Dorsolateral prefrontal cortex (tissue), 120 donors: ENCODE measurements at regions of chr15 and their contacts with region 1.

Region 1: GRCh38 chr15:64046347-64047153 is at the start of gene DAPK2:
- DNase-seq: peak; percentile 32 to 86 (median 60)
- H3K4me3 ChIP-seq: peak within 1 kb of the TSS; percentile 42 to 79 (median 67)
- H3K27ac ChIP-seq: peak within 1 kb of the TSS in 39 of 59 donors; percentile 7 to 80 (median 57)
- H3K27me3 ChIP-seq: no peaks in the 10 kb centered on the region
- CTCF ChIP-seq: peak; percentile 53 to 93 (median 78)
- total RNA-seq, gene DAPK2: 3.2 to 43.7 (median 15.5) TPM

Region 2: DNA sequence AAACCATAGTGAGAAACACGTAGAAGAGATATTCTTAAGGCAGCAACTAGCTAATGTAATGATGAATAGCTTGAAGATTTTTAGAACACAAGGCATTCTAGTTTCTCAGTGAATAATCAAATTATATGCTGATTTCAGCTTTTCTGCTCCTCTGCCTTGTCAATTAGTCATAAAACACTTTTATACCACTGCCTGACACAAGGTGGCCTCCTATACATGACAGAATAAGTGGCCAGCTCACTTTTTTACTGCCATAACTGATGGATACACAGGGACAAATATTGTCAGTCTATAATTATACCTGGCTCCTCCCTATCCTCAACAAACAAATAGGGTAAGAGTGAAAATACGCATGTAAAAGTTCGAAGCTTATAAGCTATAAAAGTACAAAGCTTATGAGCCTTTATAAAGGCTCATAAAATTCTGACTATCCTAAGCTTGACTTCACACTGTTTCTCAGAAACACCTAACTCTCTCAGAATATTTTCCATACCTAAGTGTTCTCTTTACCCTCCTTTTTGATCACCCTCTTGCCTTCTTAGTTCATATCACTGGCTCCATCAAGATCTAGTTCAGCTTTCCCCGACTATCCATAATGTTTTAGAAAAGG is 294.4 kb before region 1 on chr15:
- intact Hi-C with region 1: loop called in 1 of 2 experiments (anchors 5 kb)
- DNase-seq: peak in 1 of 10 donors; percentile 23
- H3K4me3 ChIP-seq: no peak overlapping the region
- H3K27ac ChIP-seq: peak overlapping the region in 4 of 59 donors; percentile 2 to 56 (median 35)
- H3K27me3 ChIP-seq: no peaks in the 10 kb centered on the region
- CTCF ChIP-seq: peak; percentile 37 to 95 (median 77)

Region 3: GRCh38 chr15:63833021-63833696 is 213.4 kb before region 1 on chr15:
- intact Hi-C with region 1: loop called in 1 of 2 experiments (anchors 10 kb)
- DNase-seq: peak in 5 of 10 donors; percentile 3 to 61 (median 32)
- H3K4me3 ChIP-seq: peak overlapping the region; percentile 54 to 98 (median 90)
- H3K27ac ChIP-seq: peak overlapping the region; percentile 28 to 97 (median 92)
- H3K27me3 ChIP-seq: no peaks in the 10 kb centered on the region
- CTCF ChIP-seq: no peak

Region 4: DNA sequence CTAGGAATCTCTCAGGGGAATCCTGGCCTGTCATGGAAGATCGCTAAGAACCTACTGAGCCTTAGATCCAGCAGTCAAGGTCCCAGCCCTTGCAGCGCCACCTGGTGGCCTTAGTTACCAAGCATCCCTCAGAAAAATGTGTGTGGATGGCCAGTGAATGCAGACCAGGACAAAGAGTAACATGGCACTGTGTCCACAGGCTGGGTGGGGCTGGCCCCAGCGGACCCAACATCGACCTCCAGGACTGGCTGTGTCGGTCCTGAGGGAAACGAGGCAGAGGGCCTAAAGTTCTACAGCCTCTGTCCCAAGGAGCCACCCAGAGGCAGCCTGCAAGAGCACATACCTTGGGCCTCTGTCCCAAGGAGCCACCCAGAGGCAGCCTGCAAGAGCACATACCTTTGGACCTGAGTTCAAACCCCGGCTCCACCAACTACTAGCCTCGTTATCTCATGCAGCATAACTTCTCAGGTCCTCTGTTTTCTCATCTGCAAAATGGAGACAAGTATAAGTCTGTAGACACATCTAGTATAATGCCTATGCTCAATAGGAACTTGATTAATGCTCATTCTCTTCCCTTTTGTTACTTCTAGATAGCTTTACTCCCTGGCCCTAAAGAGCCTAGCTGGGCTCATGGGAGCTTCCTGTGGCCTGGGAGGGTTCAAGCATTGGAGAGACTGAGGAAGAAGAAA is 155.3 kb before region 1 on chr15:
- intact Hi-C with region 1: loop called in 1 of 2 experiments (anchors 5 kb)
- DNase-seq: peak; percentile 64 to 89 (median 83)
- H3K4me3 ChIP-seq: no peak overlapping the region
- H3K27ac ChIP-seq: peak overlapping the region in 1 of 59 donors; percentile 27
- H3K27me3 ChIP-seq: no peaks in the 10 kb centered on the region
- CTCF ChIP-seq: peak; percentile 70 to 95 (median 88)

Region 5: GRCh38 chr15:63945007-63945788 is 101.4 kb before region 1 on chr15:
- intact Hi-C with region 1: loop called (anchors 5 to 10 kb)
- DNase-seq: peak in 8 of 10 donors; percentile 55 to 75 (median 62)
- H3K4me3 ChIP-seq: peak overlapping the region in 2 of 59 donors; percentile 12 to 16
- H3K27ac ChIP-seq: peak overlapping the region in 9 of 59 donors; percentile 2 to 59 (median 14)
- H3K27me3 ChIP-seq: no peaks in the 10 kb centered on the region
- CTCF ChIP-seq: peak; percentile 53 to 92 (median 80)

Region 6: GRCh38 chr15:64004582-64004981 is 42.0 kb before region 1 on chr15:
- intact Hi-C with region 1: loop called in 1 of 2 experiments (anchors 5 kb)
- DNase-seq: no peak
- H3K4me3 ChIP-seq: no peak overlapping the region
- H3K27ac ChIP-seq: no peak overlapping the region
- H3K27me3 ChIP-seq: no peaks in the 10 kb centered on the region
- CTCF ChIP-seq: no peak

Region 7: GRCh38 chr15:64029633-64030032 is 16.9 kb before region 1 on chr15:
- intact Hi-C with region 1: loop called in 1 of 2 experiments (anchors 2 kb)
- DNase-seq: no peak
- H3K4me3 ChIP-seq: no peak overlapping the region
- H3K27ac ChIP-seq: peak overlapping the region; percentile 5 to 98 (median 90)
- H3K27me3 ChIP-seq: no peaks in the 10 kb centered on the region
- CTCF ChIP-seq: no peak

Region 8: GRCh38 chr15:64112904-64113303 is 66.4 kb after region 1 on chr15:
- intact Hi-C with region 1: no loop called
- DNase-seq: no peak
- H3K4me3 ChIP-seq: peak overlapping the region in 2 of 59 donors; percentile 4 to 11
- H3K27ac ChIP-seq: peak overlapping the region in 56 of 59 donors; percentile 15 to 99 (median 76)
- H3K27me3 ChIP-seq: no peaks in the 10 kb centered on the region
- CTCF ChIP-seq: no peak

Region 9: DNA sequence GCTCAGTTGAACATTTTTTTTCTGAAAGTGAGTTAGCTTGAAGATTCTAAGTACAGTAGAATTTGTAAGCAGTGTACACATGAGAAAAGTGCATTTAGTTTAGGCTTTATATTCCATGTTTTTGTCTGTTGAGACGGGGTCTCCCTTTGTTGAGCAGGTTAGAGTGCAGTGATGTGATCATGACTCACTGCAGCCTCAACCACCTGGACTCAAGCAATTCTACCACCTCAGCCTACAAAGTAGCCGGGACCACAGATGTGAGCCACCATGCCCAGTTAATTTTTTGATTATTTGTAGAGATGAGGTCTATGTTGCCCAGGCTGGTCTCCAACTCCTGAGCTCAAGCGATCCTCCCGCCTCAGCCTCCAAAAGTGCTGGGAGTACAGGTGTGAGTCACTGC is 314.7 kb after region 1 on chr15:
- intact Hi-C with region 1: no loop called
- DNase-seq: no peak
- H3K4me3 ChIP-seq: no peak overlapping the region
- H3K27ac ChIP-seq: no peak overlapping the region
- H3K27me3 ChIP-seq: no peaks in the 10 kb centered on the region
- CTCF ChIP-seq: no peak